PC-9 (cell line): ENCODE measurements at regions of chr7 and their contacts with region 1.

Region 1: DNA sequence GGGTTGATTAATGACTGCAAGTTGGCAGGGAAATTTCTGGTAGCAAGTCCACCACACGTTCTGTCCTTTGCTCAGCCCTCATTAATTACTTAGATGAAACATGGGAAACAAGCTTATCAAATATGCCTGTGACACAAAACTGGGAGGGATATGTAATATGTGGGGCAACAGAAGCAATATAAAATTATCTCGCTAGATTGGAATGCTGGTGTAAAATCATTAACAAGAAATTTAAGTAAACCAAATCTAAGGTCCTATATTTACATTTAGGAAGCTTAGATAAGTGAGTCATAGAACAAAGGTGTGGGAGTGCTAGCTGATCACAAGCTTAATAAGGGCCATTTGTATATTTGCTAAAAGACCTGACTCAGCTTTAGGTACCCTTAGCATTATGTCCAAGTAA is 23.5 kb downstream of the TRPV5 start:
- DNase-seq: peak in 1 of 2 experiments; percentile 87
- H3K4me3 ChIP-seq: no peak overlapping the region
- H3K27ac ChIP-seq: peak overlapping the region; percentile 55
- H3K4me1 ChIP-seq: peaks cover 37% of the 10 kb centered on the region
- H3K27me3 ChIP-seq: no peaks in the 10 kb centered on the region
- CTCF ChIP-seq: no peak

Region 2: GRCh38 chr7:142873281-142873787 is 36.7 kb before region 1 on chr7:
- CTCF ChIA-PET with region 1: no interaction called
- POLR2A ChIA-PET with region 1: no interaction called
- intact Hi-C with region 1: loop called (anchors 2 kb)
- DNase-seq: no peak
- H3K4me3 ChIP-seq: no peak overlapping the region
- H3K27ac ChIP-seq: no peak overlapping the region
- H3K4me1 ChIP-seq: no peaks in the 10 kb centered on the region
- H3K27me3 ChIP-seq: no peaks in the 10 kb centered on the region
- CTCF ChIP-seq: peak; percentile 78

Region 3: GRCh38 chr7:143002106-143002505 is 92.1 kb after region 1 on chr7:
- CTCF ChIA-PET with region 1: interaction called, 3 read pairs
- POLR2A ChIA-PET with region 1: interaction called, 10 read pairs
- intact Hi-C with region 1: loop called (anchors 5 kb)
- DNase-seq: peak in 1 of 2 experiments; percentile 12
- H3K4me3 ChIP-seq: no peak overlapping the region
- H3K27ac ChIP-seq: no peak overlapping the region
- H3K4me1 ChIP-seq: peaks cover 4% of the 10 kb centered on the region; the same call in 1 of the 2 replicates
- H3K27me3 ChIP-seq: no peaks in the 10 kb centered on the region
- CTCF ChIP-seq: peak; percentile 73

Region 4: DNA sequence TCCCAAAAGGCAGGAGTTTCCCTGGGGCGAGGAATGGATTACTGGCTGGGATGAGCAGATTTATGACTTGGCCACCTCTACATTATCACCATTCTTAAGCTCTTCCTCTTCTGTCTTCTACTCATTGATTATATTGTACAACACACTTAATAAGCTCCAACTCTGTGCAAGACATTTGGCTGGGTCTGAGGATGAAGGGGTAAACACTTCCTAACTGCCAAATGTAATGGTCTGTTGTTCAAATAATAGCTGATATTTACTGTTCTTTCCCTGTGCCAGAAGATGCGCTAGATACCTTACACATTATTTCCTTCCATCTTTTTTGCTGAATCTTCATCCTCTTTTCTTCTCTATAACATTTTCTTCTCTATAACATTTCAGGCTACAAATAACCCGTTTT is 153.7 kb after region 1 on chr7:
- CTCF ChIA-PET with region 1: no interaction called
- POLR2A ChIA-PET with region 1: no interaction called
- intact Hi-C with region 1: no loop called
- DNase-seq: no peak
- H3K4me3 ChIP-seq: no peak overlapping the region
- H3K27ac ChIP-seq: no peak overlapping the region
- H3K4me1 ChIP-seq: no peaks in the 10 kb centered on the region
- H3K27me3 ChIP-seq: no peaks in the 10 kb centered on the region
- CTCF ChIP-seq: no peak